ENCODE measurements at regions of chr3 and their contacts with region 1.

Region 1: DNA sequence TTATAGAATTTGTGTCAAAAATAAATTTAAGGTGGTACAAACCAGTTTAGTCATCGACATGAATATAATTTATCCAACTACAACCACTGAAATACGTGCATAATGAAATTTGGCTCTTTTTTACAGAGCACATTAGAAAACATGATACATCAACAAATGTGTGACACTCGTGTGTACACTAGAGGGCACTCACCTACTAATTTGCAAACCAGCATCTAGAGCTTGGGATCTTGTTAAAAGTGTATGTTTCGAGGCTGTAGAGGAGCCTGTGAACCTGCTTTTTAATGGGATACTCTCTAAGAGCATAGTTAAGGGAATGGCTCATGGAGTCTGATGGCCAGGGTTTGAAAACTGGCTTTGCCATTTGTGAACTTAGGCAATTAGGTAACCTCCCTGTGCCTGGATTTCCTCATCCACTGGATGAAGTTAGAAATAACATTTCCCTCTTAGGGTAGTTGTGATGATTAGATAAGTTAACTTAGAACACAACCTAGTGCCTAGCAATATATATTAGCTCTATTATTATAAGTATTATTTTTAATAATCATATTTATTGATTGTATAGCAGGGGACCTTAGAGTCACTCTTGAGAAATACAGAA is 8.8 kb upstream of the CPOX start:
- DNase-seq: peak in 2 of 6 donors; percentile 13 to 49
- ATAC-seq: peak; percentile 60 to 95 (median 94)
- H3K4me3 ChIP-seq: no peak overlapping the region
- H3K27ac ChIP-seq: no peak overlapping the region
- H3K4me1 ChIP-seq: no peaks in the 10 kb centered on the region
- H3K27me3 ChIP-seq: no peaks in the 10 kb centered on the region
- CTCF ChIP-seq: peak in 3 of 4 donors; percentile 39 to 63 (median 56)

Region 2: DNA sequence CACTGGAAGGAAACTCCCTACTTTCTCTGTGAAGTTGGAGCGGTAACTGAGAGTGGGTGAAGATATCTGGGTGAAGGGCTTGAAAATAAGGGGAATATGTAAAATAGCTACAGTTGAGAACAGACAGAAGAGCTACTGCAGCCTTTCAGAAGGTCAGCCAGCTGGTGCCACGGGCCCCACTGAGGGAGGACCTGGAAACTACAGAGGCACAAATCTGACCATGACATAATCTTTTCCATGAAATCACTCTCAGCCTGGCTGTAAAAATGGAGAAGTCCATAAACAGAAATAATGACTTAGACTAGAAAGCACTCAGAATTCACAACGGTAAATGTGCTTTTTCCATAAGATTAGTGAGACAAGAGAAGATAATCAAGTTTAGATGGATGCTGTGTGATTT is 207.4 kb after region 1 on chr3:
- intact Hi-C with region 1: loop called in 2 of 3 experiments (anchors 5 kb)
- DNase-seq: no peak
- ATAC-seq: peak in 1 of 4 donors; percentile 33
- H3K4me3 ChIP-seq: no peak overlapping the region
- H3K27ac ChIP-seq: no peak overlapping the region
- H3K4me1 ChIP-seq: no peaks in the 10 kb centered on the region
- H3K27me3 ChIP-seq: no peaks in the 10 kb centered on the region
- CTCF ChIP-seq: no peak

Region 3: GRCh38 chr3:99330281-99330680 is 728.1 kb after region 1 on chr3:
- intact Hi-C with region 1: no loop called
- DNase-seq: no peak
- ATAC-seq: no peak
- H3K4me3 ChIP-seq: no peak overlapping the region
- H3K27ac ChIP-seq: no peak overlapping the region
- H3K4me1 ChIP-seq: no peaks in the 10 kb centered on the region
- H3K27me3 ChIP-seq: no peaks in the 10 kb centered on the region
- CTCF ChIP-seq: no peak